Activated T-helper 1 cell treated with anti-CD3 and anti-CD28 coated beads, Interleukin-12 subunit alpha, Interleukin-12 subunit beta, Interleukin-2, Interleukin-4 antibody, amounts not matched to agents 30 ng/mL and 10 ng/mL and 1 ng/mL, durations not matched to agents 14 hours and 24 hours and 36 hours (primary cell): ENCODE measurements at regions of chr11 and their contacts with region 1.

Region 1: DNA sequence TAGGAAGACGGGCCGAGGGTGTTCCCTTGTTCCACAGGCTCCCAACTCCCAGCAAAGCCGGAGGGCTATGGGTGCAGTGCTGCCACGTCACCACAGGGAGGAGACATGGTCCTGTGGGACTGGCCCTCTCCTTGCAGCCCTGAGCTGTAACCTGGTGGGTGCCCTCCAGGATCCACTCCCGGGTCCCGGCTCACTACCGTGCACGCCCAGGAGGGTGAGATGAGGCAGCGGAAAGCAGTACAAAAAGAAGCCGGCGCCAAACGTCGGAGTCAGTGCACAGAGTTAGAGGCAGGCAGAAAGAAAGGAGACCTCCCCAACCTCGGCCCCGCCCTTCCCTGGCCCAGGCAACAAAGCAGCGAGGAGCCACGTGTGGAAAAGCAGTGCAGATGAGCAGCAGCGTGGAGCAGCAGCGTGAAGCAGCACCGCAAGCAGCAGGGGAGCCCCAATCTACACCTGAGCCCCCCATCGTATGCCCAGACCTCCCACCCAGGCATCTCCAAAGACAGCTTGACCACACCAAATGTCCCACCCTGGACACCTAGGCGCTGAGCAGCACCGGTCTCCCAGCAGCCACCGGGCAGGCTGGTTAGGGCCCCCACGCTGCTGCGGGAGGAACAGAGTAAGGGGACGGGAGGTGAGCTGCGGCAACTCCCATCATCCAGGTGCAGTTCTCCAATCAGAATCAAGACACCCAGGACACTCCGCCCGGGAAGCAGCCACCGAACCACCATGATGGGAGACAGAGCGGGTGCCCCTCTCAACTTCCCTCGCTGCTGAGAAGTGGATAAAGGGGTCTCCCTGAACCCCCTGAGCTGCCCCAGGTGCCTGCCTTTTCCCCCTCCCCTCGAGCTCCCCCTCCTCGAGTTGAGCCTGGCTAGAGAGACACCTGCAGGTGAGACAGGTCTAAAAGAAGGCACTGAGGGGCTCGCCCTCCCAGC is 28.8 kb downstream of the IGSF9B start:
- DNase-seq: peak; percentile 59
- H3K4me3 Mint-ChIP-seq: peak overlapping the region; percentile 79
- H3K27ac Mint-ChIP-seq: peak overlapping the region; percentile 80
- H3K4me1 Mint-ChIP-seq: peaks cover 31% of the 10 kb centered on the region
- H3K27me3 Mint-ChIP-seq: no peaks in the 10 kb centered on the region

Region 2: DNA sequence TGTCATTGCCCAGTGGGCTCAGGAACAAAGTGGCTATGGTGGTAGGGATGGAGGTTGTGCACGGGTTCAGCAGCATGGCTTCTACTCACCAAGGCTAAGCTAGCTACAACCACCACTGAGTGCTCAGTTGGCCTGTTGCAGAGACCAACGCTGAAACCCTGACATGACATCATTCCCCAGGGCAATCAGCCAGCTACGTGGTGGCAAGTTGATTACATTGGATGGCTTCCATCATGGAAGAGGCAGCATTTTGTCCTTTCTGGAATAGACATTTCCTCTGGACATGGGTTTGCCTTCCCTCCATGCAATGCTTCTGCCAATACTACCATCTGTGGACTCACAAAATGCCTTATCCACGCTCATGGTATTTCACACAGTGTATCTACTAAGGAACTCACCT is 1029.9 kb before region 1 on chr11:
- intact Hi-C with region 1: no loop called
- DNase-seq: no peak
- H3K4me3 Mint-ChIP-seq: no peak overlapping the region
- H3K27ac Mint-ChIP-seq: no peak overlapping the region
- H3K4me1 Mint-ChIP-seq: no peaks in the 10 kb centered on the region
- H3K27me3 Mint-ChIP-seq: no peaks in the 10 kb centered on the region

Region 3: GRCh38 chr11:133636711-133637355 is 291.1 kb before region 1 on chr11:
- intact Hi-C with region 1: no loop called
- DNase-seq: no peak
- H3K4me3 Mint-ChIP-seq: no peak overlapping the region
- H3K27ac Mint-ChIP-seq: no peak overlapping the region
- H3K4me1 Mint-ChIP-seq: no peaks in the 10 kb centered on the region
- H3K27me3 Mint-ChIP-seq: peaks cover 1% of the 10 kb centered on the region

Region 4: DNA sequence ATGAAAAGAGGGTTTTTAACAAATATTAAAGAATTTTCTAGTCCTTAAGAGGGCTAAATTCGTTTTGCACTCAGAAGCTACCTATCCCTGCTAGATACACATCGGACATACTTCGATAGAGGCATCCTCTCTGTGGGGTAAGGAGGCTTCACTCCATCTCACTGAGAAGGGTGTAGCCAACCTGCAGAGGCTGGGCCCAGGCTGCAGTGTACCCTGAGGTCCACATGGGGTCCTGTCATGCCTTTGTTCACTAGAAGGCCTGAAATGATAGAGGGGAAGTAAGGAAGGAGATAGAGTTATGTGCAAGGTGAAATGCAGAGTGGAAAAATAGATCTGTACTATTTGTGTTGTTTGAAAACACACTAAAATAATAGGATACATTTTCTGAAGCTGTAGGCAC is 16.8 kb before region 1 on chr11:
- intact Hi-C with region 1: no loop called
- DNase-seq: no peak
- H3K4me3 Mint-ChIP-seq: no peak overlapping the region
- H3K27ac Mint-ChIP-seq: no peak overlapping the region
- H3K4me1 Mint-ChIP-seq: no peaks in the 10 kb centered on the region
- H3K27me3 Mint-ChIP-seq: no peaks in the 10 kb centered on the region

Region 5: GRCh38 chr11:133947321-133947756 is 19.4 kb after region 1 on chr11:
- intact Hi-C with region 1: loop called (anchors 1 kb)
- DNase-seq: peak; percentile 63
- H3K4me3 Mint-ChIP-seq: peak overlapping the region; percentile 69
- H3K27ac Mint-ChIP-seq: peak overlapping the region; percentile 83
- H3K4me1 Mint-ChIP-seq: peaks cover 80% of the 10 kb centered on the region
- H3K27me3 Mint-ChIP-seq: no peaks in the 10 kb centered on the region

Region 6: DNA sequence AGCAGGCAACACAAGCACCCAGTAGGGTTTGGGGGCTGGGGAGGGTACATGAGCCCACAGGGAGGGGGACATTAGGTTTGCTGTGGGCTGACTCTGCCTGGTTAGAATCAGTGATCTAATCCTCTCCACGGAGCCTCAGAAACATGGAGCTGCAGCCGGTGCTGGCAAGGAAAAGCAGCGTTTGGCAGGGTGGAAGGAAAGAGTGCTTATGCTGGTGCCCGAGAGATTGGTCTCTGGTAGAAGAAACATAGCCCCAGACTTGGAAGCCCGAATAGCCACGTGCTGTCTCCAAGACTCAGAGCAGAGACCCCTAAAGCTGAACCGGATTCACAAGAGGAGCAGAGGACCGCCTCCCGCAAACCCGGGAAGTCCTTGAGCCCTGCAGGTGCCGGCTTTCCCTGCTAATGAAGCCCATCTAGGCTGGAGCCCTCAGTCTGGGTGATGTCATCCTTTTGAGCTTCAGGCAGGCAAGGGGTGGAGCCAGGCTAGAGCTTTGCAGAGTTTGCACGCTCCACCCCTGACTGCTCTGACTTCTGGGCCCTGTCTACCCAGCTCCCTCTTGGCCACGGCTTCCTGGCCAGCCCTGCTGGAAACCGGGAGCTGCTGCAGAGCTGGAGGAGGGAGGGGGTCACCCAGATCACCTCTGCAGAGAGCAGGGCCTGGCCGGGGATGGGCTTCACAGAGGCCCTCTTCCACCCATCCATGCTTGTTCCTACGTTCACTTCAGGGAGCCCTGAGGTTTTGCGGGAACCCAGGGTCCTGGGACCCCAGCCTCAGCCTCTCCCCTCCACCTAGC is 105.9 kb after region 1 on chr11:
- intact Hi-C with region 1: loop called (anchors 1 kb)
- DNase-seq: peak; percentile 65
- H3K4me3 Mint-ChIP-seq: peak overlapping the region; percentile 24
- H3K27ac Mint-ChIP-seq: peak overlapping the region; percentile 59
- H3K4me1 Mint-ChIP-seq: peaks cover 55% of the 10 kb centered on the region
- H3K27me3 Mint-ChIP-seq: peaks cover 7% of the 10 kb centered on the region

Region 7: DNA sequence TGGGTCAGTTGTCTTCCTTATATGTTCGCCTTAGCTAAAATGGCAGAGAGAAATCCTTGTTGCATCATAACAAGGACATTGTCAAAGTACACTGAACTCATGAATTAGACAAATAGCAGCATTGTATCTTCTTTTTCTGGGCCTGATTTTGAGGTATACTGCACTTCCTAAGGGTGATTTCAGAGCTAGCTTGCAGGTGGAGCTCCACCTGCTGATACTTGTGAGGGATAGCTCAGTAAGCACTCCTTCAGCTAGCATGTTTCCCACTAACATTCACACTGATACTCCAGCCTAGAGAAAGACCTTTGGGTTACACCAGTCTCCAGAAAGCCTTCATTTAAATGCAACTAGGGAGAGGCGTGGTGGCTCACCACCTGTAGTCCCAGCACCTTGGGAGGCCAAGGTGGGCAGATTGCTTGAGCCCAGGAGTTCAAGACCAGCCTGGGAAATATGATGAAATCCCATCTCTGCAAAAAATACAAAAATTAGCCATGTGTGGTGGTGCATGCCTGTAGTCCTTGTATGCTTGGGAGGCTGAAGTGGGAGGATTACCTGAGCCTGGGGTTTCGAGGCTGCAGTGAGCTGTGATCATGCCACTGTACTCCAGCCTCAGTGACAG is 170.7 kb after region 1 on chr11:
- intact Hi-C with region 1: loop called (anchors 1 kb)
- DNase-seq: no peak
- H3K4me3 Mint-ChIP-seq: no peak overlapping the region
- H3K27ac Mint-ChIP-seq: no peak overlapping the region
- H3K4me1 Mint-ChIP-seq: peaks cover 5% of the 10 kb centered on the region
- H3K27me3 Mint-ChIP-seq: peaks cover 5% of the 10 kb centered on the region

Region 8: DNA sequence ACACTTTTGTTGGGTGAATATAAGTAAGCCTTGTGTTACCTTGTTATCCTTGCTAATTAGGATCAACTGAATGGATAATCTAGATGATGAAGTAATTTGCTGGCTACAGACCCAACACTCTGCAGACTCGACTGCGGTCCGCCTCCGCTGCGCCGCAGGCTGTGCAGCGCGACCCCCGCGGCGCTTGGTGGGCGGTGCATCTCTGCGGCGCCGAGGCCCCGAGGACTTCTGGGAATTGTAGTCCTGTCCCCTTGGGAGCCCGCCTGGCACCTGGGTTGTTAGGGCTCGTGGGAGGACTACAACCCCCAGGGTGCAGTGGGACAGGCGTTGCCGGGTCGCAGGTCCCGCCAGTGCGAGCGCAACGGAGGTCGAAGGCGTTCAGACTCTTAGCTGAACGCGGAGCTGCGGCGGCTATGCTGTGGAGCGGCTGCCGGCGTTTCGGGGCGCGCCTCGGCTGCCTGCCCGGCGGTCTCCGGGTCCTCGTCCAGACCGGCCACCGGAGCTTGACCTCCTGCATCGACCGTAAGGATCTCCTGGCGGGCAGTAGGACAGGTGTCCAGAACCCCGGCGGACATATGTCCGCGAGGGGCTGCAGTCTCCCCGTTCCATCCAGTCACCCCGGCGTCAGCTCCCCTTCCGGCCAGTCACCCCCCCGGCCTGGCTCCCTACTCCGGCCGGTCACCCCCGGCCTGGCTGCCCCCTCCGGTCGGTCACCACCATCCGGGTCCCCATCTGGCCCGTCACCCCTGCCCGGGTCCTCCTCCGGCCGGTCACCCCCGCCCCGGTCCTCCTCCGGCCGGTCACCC is 325.4 kb after region 1 on chr11 and contains the starts of genes ACAD8 and THYN1:
- intact Hi-C with region 1: loop called (anchors 2 kb)
- DNase-seq: peak; percentile 94
- H3K4me3 Mint-ChIP-seq: peak within 1 kb of the TSS; percentile 94
- H3K27ac Mint-ChIP-seq: peak within 1 kb of the TSS; percentile 86
- H3K4me1 Mint-ChIP-seq: peaks cover 46% of the 10 kb centered on the region
- H3K27me3 Mint-ChIP-seq: no peaks in the 10 kb centered on the region
- total RNA-seq, gene ACAD8: 25.6 and 26.2 TPM in 2 replicates
- total RNA-seq, gene THYN1: 55.0 and 58.8 TPM in 2 replicates